A673 (cell line): ENCODE measurements at regions of chr1 and their contacts with region 1.

Region 1: DNA sequence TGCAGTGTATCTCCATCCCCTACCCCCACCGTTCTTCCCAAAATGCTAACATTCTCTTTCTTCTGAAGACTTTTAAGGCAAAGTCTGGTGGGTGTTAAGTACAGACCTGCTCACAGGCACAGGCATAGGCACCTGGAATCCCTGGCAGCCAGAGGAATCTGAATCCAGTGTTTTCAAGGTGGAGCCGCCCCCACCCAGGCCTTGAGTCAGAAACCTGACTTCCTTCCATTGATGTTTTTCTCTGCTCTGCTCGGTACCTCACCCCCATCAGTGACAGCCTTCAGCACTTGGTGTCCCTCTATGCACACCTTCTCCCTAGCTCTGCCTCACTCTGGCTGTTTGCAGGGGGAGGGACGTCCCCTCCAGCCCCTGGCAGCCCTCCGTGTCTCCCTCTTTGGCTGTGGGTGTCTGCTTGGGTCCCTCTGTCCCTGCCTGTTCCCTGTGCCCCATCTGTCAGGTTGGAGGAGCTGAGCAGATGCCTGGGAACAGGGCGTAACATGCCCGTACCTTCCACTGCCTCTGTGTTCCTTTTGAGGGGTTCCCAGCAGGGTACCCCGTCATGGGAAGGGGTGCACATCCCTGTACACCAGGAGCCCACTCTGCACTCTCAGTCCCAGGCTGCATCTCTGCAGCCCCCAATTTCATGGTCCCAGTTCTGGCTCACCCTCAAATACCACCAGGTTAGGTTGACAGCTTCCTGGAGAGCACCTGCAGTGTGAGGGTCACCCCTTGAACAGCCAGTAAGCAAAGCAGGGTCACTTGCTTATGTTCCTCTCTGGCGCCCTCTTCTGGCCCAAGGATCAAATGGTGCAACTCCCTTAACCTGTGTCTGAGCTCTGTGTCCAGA is 6.7 kb downstream of the NCDN start:
- DNase-seq: peak; percentile 71
- H3K4me3 ChIP-seq: no peak overlapping the region
- H3K27ac ChIP-seq: no peak overlapping the region
- H3K4me1 ChIP-seq: peaks cover 2% of the 10 kb centered on the region
- H3K27me3 ChIP-seq: no peaks in the 10 kb centered on the region
- CTCF ChIP-seq: peak; percentile 79

Region 2: GRCh38 chr1:35726450-35727433 is 162.5 kb after region 1 on chr1:
- CTCF ChIA-PET with region 1: interaction called, 18 read pairs
- POLR2A ChIA-PET with region 1: no interaction called
- intact Hi-C with region 1: loop called (anchors 1 kb)
- DNase-seq: peak; percentile 80
- H3K4me3 ChIP-seq: no peak overlapping the region
- H3K27ac ChIP-seq: no peak overlapping the region
- H3K4me1 ChIP-seq: peaks cover 3% of the 10 kb centered on the region
- H3K27me3 ChIP-seq: no peaks in the 10 kb centered on the region
- CTCF ChIP-seq: peak; percentile 89

Region 3: DNA sequence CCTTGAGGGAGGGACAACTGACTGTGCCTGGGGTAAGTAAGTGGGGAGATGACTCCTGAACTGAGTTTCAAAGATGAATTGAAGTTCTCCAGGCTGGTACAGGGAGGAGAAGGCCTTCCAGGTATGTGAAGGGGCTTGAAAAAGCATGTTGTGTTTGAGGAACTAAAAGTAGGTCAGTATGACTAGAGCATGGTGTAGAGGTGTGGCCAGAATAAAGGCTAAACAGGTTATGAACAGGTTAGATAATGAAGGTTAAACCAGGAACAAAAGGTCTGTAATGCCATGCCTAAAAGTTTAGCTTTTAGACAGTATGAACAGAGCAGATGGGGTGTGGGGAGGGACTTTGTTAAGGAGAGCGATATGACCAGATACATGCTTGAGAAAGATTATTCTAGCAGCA is 212.8 kb after region 1 on chr1:
- CTCF ChIA-PET with region 1: interaction called, 3 read pairs
- POLR2A ChIA-PET with region 1: no interaction called
- intact Hi-C with region 1: loop called (anchors 1 kb)
- DNase-seq: no peak
- H3K4me3 ChIP-seq: no peak overlapping the region
- H3K27ac ChIP-seq: no peak overlapping the region
- H3K4me1 ChIP-seq: no peaks in the 10 kb centered on the region
- H3K27me3 ChIP-seq: no peaks in the 10 kb centered on the region
- CTCF ChIP-seq: no peak